H1 (cell line): ENCODE measurements at regions of chr6 and their contacts with region 1.

Region 1: GRCh38 chr6:52233975-52234823 is 10.1 kb downstream of the IL17F start:
- DNase-seq: peak; percentile 25 to 58
- H3K4me3 ChIP-seq: no peak overlapping the region
- H3K27ac ChIP-seq: no peak overlapping the region
- H3K4me1 ChIP-seq: peaks cover 0 to 4% (median 0%) of the 10 kb centered on the region in 4 experiments; a peak in 1 of 7 replicates
- H3K27me3 ChIP-seq: no peaks in the 10 kb centered on the region
- CTCF ChIP-seq: peak; percentile 60 to 86 (median 82)
- EP300 ChIP-seq: no peak
- POLR2A ChIP-seq: no peak
- RAD21 ChIP-seq: peak; percentile 85 to 90

Region 2: GRCh38 chr6:52049252-52050050 is 184.7 kb before region 1 on chr6:
- CTCF ChIA-PET with region 1: interaction called, 12 read pairs
- POLR2A ChIA-PET with region 1: no interaction called
- DNase-seq: no peak
- H3K4me3 ChIP-seq: no peak overlapping the region
- H3K27ac ChIP-seq: no peak overlapping the region
- H3K4me1 ChIP-seq: no peaks in the 10 kb centered on the region; a peak in 1 of 7 replicates
- H3K27me3 ChIP-seq: no peaks in the 10 kb centered on the region; a peak in 1 of 7 replicates
- CTCF ChIP-seq: peak in 2 of 3 experiments; percentile 38 to 71; a peak in 2 of 4 replicates
- EP300 ChIP-seq: no peak
- POLR2A ChIP-seq: no peak
- RAD21 ChIP-seq: peak; percentile 69 to 70

Region 3: GRCh38 chr6:52063584-52064344 is 170.4 kb before region 1 on chr6:
- CTCF ChIA-PET with region 1: interaction called, 16 read pairs
- POLR2A ChIA-PET with region 1: no interaction called
- DNase-seq: peak in 1 of 2 experiments; percentile 15
- H3K4me3 ChIP-seq: no peak overlapping the region
- H3K27ac ChIP-seq: no peak overlapping the region; the same call in 1 of the 2 replicates
- H3K4me1 ChIP-seq: peaks cover 0 to 16% (median 7%) of the 10 kb centered on the region in 4 experiments; a peak in 5 of 7 replicates
- H3K27me3 ChIP-seq: no peaks in the 10 kb centered on the region
- CTCF ChIP-seq: peak; percentile 67 to 76 (median 70)
- EP300 ChIP-seq: no peak
- POLR2A ChIP-seq: no peak
- RAD21 ChIP-seq: peak; percentile 76 to 82

Region 4: GRCh38 chr6:52162940-52163908 is 71.0 kb before region 1 on chr6:
- CTCF ChIA-PET with region 1: interaction called, 59 read pairs
- POLR2A ChIA-PET with region 1: no interaction called
- DNase-seq: no peak
- H3K4me3 ChIP-seq: no peak overlapping the region
- H3K27ac ChIP-seq: no peak overlapping the region
- H3K4me1 ChIP-seq: no peaks in the 10 kb centered on the region
- H3K27me3 ChIP-seq: peaks cover 0 to 1% (median 0%) of the 10 kb centered on the region in 4 experiments; a peak in 1 of 7 replicates
- CTCF ChIP-seq: peak in 2 of 3 experiments; percentile 76 to 83; a peak in 3 of 4 replicates
- EP300 ChIP-seq: no peak
- POLR2A ChIP-seq: no peak
- RAD21 ChIP-seq: peak; percentile 97 to 98

Region 5: DNA sequence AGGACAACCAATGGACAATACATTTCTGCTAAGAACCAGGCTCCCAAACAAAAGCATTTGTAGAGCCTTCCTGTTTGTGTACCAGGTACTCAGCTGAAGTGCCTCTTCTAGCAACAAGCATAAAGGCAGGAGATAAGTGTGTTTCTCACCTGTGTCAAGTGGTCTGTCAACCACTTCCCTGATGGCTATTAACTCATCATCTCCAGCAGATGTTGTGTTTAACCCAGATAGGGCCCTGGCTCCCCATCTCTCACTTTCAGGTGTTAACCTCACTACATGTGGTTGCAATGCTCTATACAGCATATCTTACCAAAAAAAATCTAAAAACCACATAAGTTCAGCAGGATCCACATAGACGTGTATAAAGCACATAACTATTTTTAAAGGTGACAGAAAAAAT is 57.6 kb before region 1 on chr6:
- CTCF ChIA-PET with region 1: interaction called, 10 read pairs
- POLR2A ChIA-PET with region 1: no interaction called
- DNase-seq: no peak
- H3K4me3 ChIP-seq: no peak overlapping the region
- H3K27ac ChIP-seq: no peak overlapping the region
- H3K4me1 ChIP-seq: no peaks in the 10 kb centered on the region
- H3K27me3 ChIP-seq: no peaks in the 10 kb centered on the region
- CTCF ChIP-seq: no peak
- EP300 ChIP-seq: no peak
- POLR2A ChIP-seq: no peak
- RAD21 ChIP-seq: no peak

Region 6: GRCh38 chr6:52210227-52210626 is 24.0 kb before region 1 on chr6:
- CTCF ChIA-PET with region 1: interaction called, 18 read pairs
- POLR2A ChIA-PET with region 1: interaction called, 3 read pairs
- DNase-seq: no peak
- H3K4me3 ChIP-seq: no peak overlapping the region
- H3K27ac ChIP-seq: no peak overlapping the region
- H3K4me1 ChIP-seq: no peaks in the 10 kb centered on the region
- H3K27me3 ChIP-seq: no peaks in the 10 kb centered on the region
- CTCF ChIP-seq: no peak
- EP300 ChIP-seq: no peak
- POLR2A ChIP-seq: no peak
- RAD21 ChIP-seq: no peak

Region 7: GRCh38 chr6:52253494-52253893 is 19.3 kb after region 1 on chr6:
- CTCF ChIA-PET with region 1: interaction called, 99 read pairs
- POLR2A ChIA-PET with region 1: interaction called, 4 read pairs
- DNase-seq: no peak
- H3K4me3 ChIP-seq: no peak overlapping the region
- H3K27ac ChIP-seq: no peak overlapping the region
- H3K4me1 ChIP-seq: no peaks in the 10 kb centered on the region
- H3K27me3 ChIP-seq: no peaks in the 10 kb centered on the region
- CTCF ChIP-seq: no peak
- EP300 ChIP-seq: no peak
- POLR2A ChIP-seq: no peak
- RAD21 ChIP-seq: no peak

Region 8: GRCh38 chr6:52337633-52338290 is 103.6 kb after region 1 on chr6:
- CTCF ChIA-PET with region 1: no interaction called
- POLR2A ChIA-PET with region 1: no interaction called
- DNase-seq: no peak
- H3K4me3 ChIP-seq: no peak overlapping the region
- H3K27ac ChIP-seq: no peak overlapping the region
- H3K4me1 ChIP-seq: no peaks in the 10 kb centered on the region
- H3K27me3 ChIP-seq: no peaks in the 10 kb centered on the region; a peak in 1 of 7 replicates
- CTCF ChIP-seq: no peak
- EP300 ChIP-seq: no peak
- POLR2A ChIP-seq: no peak
- RAD21 ChIP-seq: no peak